HEK293T (cell line): ENCODE measurements at regions of chrX and their contacts with region 1.

Region 1: DNA sequence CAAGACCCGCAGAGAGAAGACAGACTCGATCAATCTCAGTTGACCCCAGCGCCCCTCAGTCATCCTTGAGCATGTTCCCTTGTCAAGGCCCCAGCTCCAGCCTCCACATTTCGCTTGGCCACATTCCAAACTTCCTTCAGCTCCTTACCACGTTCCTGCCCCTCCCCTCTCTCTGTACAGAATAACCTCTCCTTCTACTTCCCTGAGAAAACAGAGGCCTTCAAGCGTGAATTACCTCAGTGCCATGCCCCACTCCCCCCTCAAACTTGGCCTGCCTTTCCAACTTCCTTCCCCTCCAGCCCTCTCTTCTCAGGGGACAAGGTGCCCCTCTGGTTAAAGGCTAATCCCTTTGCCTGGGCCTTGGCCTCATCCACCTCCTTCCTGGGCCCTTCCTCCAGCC is 3.2 kb upstream of the RIPPLY1 start:
- DNase-seq: no peak

Region 2: GRCh38 chrX:106742805-106743204 is 163.6 kb before region 1 on chrX:
- CTCF ChIA-PET with region 1: no interaction called
- POLR2A ChIA-PET with region 1: no interaction called
- DNase-seq: no peak

Region 3: GRCh38 chrX:106894392-106894909 is 11.9 kb before region 1 on chrX:
- CTCF ChIA-PET with region 1: interaction called, 22 read pairs
- POLR2A ChIA-PET with region 1: interaction called, 3 read pairs
- DNase-seq: peak; percentile 85